CD14-positive monocyte (primary cell): ENCODE measurements at regions of chr4 and their contacts with region 1.

Region 1: DNA sequence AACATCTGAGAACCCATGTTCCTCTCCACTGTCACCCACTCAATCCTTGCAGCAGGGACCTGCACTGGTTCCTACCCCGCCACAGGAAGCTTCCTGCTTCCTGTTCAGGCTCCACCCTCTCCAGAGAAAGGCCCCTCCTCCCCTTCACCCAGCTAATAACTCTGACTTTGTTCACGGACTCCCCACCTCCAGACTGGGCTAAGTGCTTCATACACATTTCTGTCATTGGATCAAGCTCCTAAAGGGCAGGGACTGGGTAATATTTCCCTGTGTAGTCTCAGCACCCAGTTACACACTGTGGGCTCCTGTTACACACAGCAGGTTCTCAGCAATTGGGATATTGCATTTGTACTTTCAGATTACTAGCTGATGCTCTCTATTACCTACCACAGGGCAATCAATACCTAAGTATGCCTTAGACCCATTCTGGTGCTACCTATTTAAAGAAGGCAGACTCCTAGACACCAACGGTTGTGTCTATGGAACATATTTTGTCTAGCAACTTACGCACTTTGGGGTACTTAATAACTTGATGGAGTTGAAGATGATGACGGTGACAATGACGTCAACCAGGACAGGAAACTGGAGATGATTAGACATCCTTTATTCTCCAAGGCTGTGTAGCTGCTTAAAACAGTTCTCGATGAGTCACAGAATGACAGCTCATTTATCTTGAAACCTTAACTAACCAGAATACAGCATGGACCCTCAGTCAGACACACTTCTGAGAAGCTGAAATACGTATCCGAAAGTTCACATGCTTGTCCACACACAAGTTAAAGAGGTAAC is 58.1 kb downstream of the MAML3 start:
- DNase-seq: peak; percentile 93 to 98 (median 98)
- H3K4me3 ChIP-seq: peak overlapping the region; percentile 29 to 68 (median 30)
- H3K4me3 Mint-ChIP-seq: peak overlapping the region; percentile 75 to 85
- H3K27ac ChIP-seq: peak overlapping the region; percentile 96 to 97
- H3K27ac Mint-ChIP-seq: peak overlapping the region; percentile 92 to 99 (median 98)
- H3K4me1 ChIP-seq: peaks cover 99 to 100% of the 10 kb centered on the region in 2 donors
- H3K4me1 Mint-ChIP-seq: peaks cover 99% of the 10 kb centered on the region
- H3K27me3 ChIP-seq: no peaks in the 10 kb centered on the region
- H3K27me3 Mint-ChIP-seq: no peaks in the 10 kb centered on the region
- CTCF ChIP-seq: no peak

Region 2: DNA sequence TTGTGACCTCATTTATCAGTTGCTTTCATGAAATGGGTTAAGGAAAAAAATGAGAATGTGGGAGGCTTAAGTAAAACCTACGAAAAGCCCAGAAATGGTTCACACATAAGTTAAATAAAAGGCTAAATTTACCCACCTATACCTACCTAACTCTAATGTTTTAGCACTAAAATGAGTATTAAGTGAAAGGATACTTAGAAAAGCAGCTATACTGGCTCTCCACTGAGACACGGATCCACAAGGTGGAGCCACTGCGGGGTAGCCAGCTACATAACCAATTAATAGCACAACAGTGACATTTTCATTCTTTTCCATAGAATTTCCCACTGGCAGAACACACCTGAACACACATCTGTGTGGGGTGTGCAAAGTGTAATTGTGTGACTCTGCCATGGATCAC is 43.8 kb before region 1 on chr4:
- intact Hi-C with region 1: loop called (anchors 5 kb)
- DNase-seq: peak in 1 of 3 donors; percentile 49
- H3K4me3 ChIP-seq: no peak overlapping the region
- H3K4me3 Mint-ChIP-seq: no peak overlapping the region
- H3K27ac ChIP-seq: no peak overlapping the region
- H3K27ac Mint-ChIP-seq: no peak overlapping the region
- H3K4me1 ChIP-seq: peaks cover 49 to 70% of the 10 kb centered on the region in 2 donors
- H3K4me1 Mint-ChIP-seq: peaks cover 66% of the 10 kb centered on the region
- H3K27me3 ChIP-seq: no peaks in the 10 kb centered on the region
- H3K27me3 Mint-ChIP-seq: no peaks in the 10 kb centered on the region
- CTCF ChIP-seq: peak; percentile 53

Region 3: DNA sequence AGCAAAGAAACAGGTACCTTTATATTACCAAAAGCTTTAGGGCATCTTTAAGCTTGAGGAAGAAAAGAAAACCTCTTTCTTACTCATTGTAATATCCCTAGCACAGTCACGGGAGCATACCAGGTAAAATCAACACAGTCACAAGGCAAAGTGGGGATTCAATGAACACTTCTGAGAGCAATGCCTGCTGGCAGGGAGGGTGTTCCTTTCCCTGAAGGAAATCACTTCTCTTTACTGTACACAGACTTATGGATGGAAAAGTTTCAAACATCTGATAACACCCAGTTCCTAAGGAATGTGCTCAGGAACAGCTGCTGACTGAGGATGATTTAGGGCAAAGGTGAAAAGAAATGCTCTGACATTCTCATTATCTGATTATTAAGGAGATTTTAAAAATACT is 36.7 kb before region 1 on chr4:
- intact Hi-C with region 1: loop called (anchors 5 kb)
- DNase-seq: no peak
- H3K4me3 ChIP-seq: no peak overlapping the region
- H3K4me3 Mint-ChIP-seq: no peak overlapping the region
- H3K27ac ChIP-seq: no peak overlapping the region
- H3K27ac Mint-ChIP-seq: no peak overlapping the region
- H3K4me1 ChIP-seq: peaks cover 20 to 30% of the 10 kb centered on the region in 2 donors
- H3K4me1 Mint-ChIP-seq: peaks cover 27% of the 10 kb centered on the region
- H3K27me3 ChIP-seq: no peaks in the 10 kb centered on the region
- H3K27me3 Mint-ChIP-seq: no peaks in the 10 kb centered on the region
- CTCF ChIP-seq: no peak

Region 4: DNA sequence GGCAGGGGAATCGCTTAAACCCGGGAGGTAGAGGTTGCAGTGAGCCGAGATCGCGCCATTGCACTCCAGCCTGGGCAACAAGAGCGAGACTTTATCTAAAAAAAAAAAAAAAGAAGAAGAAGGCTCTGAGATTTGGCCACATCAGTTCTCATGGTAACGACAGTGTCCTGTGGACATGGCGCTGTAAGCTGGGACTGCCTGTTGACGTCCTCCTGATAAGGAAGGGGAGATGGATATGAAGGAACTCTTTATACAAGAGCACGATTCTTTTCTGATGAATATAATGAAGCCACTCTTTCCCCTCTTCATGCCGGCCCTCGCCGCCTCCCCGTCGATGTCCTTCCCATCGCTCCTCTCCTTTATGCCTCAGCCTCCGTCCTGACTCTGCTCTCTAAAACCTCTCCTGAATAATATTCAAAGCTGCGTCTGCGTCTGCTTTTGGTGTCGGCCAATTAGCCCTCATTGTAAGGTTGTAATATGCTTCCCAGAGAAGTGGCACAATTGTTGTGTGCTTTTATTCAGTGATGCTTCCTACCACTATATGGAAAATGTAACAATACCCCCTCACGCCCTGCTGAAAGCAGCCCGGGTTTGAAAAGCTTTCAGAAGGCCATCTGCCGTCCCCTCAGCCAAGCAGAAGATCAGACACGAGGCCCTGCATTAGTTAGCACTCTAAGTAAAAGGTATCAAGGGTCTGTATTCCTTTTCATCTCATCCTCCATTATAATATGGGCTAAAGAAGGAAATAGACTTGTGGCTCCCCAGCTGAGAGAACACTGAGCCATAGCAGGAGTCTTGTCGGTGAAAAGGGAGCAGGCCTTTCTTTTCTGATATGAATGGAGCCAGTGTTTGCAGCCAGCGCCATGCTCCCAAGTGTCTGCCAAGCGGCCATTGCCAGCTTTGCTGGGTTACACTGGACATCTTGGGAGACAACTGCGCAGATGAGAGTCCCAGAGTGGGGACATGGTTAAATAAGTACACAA is 255.5 kb after region 1 on chr4:
- intact Hi-C with region 1: no loop called
- DNase-seq: no peak
- H3K4me3 ChIP-seq: no peak overlapping the region
- H3K4me3 Mint-ChIP-seq: no peak overlapping the region
- H3K27ac ChIP-seq: no peak overlapping the region
- H3K27ac Mint-ChIP-seq: no peak overlapping the region
- H3K4me1 ChIP-seq: no peaks in the 10 kb centered on the region
- H3K4me1 Mint-ChIP-seq: peaks cover 4% of the 10 kb centered on the region
- H3K27me3 ChIP-seq: no peaks in the 10 kb centered on the region
- H3K27me3 Mint-ChIP-seq: peaks cover 1 to 5% (median 2%) of the 10 kb centered on the region in 3 donors
- CTCF ChIP-seq: no peak

Region 5: GRCh38 chr4:140367738-140368137 is 271.9 kb after region 1 on chr4:
- intact Hi-C with region 1: no loop called
- DNase-seq: no peak
- H3K4me3 ChIP-seq: no peak overlapping the region
- H3K4me3 Mint-ChIP-seq: no peak overlapping the region
- H3K27ac ChIP-seq: no peak overlapping the region
- H3K27ac Mint-ChIP-seq: no peak overlapping the region
- H3K4me1 ChIP-seq: peaks cover 5% of the 10 kb centered on the region in 2 donors
- H3K4me1 Mint-ChIP-seq: no peaks in the 10 kb centered on the region
- H3K27me3 ChIP-seq: no peaks in the 10 kb centered on the region
- H3K27me3 Mint-ChIP-seq: no peaks in the 10 kb centered on the region
- CTCF ChIP-seq: no peak